AG04449 (cell line): ENCODE measurements at regions of chr1 and their contacts with region 1.

Region 1: DNA sequence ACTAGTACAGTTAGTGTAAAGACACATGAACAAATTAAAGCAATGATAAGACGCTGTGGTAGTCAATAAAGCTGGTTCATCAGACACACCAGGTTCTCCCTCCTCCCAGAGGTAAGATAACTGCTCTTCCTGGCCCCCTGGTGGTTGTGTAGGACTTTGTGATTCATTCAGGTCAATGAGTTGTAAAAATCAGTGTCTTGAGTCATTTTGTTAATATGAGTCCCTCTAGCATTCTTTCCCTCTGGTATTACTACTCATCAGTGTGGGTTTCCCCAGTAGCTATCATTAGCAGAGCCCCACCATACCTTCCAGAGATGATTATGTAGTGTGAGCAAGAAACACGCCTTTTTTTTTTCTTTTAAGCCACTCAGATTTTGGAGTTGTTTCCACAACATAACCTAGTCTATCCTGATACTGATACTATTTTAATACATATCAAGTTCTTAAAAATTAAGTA is 3.6 kb upstream of the SETDB1 start:
- DNase-seq: peak; percentile 81
- H3K4me3 ChIP-seq: no peak overlapping the region
- CTCF ChIP-seq: peak; percentile 66

Region 2: GRCh38 chr1:150829743-150830142 is 92.8 kb before region 1 on chr1:
- CTCF ChIA-PET with region 1: interaction called, 12 read pairs
- POLR2A ChIA-PET with region 1: no interaction called
- DNase-seq: no peak
- H3K4me3 ChIP-seq: no peak overlapping the region
- CTCF ChIP-seq: no peak

Region 3: DNA sequence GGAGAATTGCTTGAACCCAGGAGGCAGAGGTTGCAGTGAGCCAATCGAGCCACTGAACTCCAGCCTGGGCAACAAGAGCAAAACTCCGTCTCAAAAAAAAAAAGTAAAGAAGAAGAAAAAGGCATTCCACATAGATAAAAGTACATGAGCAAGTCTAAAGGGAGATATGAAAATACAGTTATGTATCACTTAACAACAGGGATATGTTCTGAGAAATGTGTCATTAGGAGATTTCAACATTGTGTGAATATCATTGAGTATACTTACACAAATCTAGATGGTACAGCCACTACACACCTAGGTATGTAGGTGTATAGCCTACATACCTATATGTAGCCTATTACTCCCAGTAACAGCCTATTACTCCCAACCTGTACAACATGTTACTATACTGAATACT is 58.8 kb before region 1 on chr1:
- CTCF ChIA-PET with region 1: interaction called, 10 read pairs
- POLR2A ChIA-PET with region 1: no interaction called
- DNase-seq: no peak
- H3K4me3 ChIP-seq: no peak overlapping the region
- CTCF ChIP-seq: no peak

Region 4: DNA sequence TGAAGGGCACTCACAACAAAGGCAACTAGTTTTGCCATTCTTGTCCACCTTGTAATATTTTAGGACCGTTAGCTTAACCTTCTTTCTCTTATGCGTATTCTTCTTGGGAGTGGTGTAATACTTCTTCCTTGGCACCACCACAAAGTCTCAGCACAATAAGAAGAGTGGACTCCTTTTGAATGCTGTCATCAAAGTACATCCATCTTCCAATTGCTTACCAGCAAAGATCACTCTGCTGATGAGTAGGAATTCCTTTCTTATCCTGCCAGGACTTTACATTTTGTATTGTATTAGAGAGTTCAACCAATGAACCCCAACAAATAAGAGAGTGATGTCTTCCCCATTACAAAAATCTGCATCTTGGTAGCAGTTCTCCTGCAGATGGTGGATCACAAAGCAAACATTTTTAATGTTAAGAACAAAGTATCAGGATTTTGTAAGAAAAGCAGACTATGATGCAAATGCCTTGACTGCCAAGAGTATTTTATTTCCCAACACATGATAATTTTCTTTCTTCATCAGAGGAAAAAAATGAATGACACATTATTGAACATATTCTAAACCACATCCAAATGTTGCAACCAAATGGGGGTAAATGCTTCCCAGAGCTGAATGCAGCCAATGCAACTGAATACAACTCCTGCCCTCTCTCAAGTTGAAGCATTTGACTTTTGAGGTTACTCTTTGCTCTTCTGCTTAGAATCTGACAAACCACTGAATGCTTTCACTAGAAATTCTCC is 41.0 kb before region 1 on chr1:
- CTCF ChIA-PET with region 1: interaction called, 10 read pairs
- POLR2A ChIA-PET with region 1: interaction called, 3 read pairs
- DNase-seq: peak; percentile 91
- H3K4me3 ChIP-seq: no peak overlapping the region
- CTCF ChIP-seq: no peak

Region 5: DNA sequence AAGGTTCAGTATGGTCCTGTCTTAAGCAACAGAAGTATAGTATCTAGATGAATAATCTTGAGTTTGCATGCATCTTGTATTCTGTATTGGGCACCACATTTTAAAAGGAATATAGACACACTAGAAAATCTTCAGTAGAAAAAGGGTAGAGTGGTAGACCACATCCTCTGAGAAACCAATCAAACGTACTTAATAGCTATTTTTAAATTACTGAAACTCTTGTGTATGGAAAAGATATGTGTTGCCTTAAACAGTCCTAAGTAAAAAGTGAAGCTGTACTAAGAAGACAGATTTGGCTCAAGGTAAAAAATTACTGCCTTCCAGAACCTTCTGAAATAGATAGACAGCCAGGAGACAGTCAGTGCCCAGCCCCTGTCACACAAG is 32.5 kb before region 1 on chr1:
- CTCF ChIA-PET with region 1: interaction called, 12 read pairs
- POLR2A ChIA-PET with region 1: no interaction called
- DNase-seq: no peak
- H3K4me3 ChIP-seq: no peak overlapping the region
- CTCF ChIP-seq: no peak

Region 6: DNA sequence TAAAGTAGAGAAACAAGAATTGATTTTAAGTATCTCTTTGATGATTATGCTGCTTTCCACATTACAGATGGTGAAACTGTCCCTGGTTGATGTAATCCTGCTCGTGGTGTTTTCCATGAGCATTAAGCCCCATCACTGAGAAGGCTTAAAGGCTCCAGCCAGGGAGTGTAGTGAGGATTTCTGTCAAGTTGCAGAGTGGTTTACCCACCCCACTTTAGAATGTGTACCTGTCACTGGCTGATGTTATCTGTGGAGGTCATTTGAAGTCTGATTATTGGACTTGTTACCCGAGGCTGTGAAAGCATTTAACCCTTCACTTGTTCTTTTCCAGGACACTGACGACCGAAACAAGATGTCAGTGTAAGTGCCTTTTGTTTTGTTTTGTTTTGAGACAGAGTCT is 39.3 kb after region 1 on chr1:
- CTCF ChIA-PET with region 1: no interaction called
- POLR2A ChIA-PET with region 1: no interaction called
- DNase-seq: no peak
- H3K4me3 ChIP-seq: no peak overlapping the region
- CTCF ChIP-seq: no peak